AG04450 (cell line): ENCODE measurements at regions of chr12 and their contacts with region 1.

Region 1: GRCh38 chr12:49842519-49843352 is at the start of gene BCDIN3D:
- DNase-seq: peak; percentile 65
- H3K4me3 ChIP-seq: peak within 1 kb of the TSS; percentile 83
- H3K27ac ChIP-seq: peak within 1 kb of the TSS; percentile 92
- H3K27me3 ChIP-seq: no peaks in the 10 kb centered on the region
- CTCF ChIP-seq: no peak
- polyA plus RNA-seq, gene BCDIN3D: 3.7 and 3.8 TPM in 2 replicates

Region 2: DNA sequence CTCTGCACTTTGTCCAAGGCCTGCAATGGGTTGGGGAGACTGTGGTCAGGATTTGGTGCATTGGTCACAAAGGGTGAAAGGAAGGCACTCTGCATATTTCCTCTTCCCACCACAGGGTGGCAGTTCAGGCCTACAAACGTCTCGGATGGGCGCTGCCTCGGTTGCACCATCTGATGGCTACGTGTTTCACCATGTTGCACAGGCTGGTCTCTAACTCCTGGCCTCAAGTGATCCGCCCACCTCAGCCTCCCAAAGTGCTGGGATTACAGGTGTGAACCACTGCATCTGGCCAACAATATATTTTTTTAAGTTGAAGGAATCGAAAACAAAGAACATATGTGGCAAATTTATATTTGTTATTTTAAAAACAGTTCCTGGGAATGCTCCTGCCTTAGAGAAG is 66.3 kb before region 1 on chr12:
- CTCF ChIA-PET with region 1: interaction called, 30 read pairs
- POLR2A ChIA-PET with region 1: no interaction called
- DNase-seq: peak; percentile 56
- H3K4me3 ChIP-seq: no peak overlapping the region
- H3K27ac ChIP-seq: no peak overlapping the region
- H3K27me3 ChIP-seq: peaks cover 3% of the 10 kb centered on the region
- CTCF ChIP-seq: peak; percentile 87

Region 3: GRCh38 chr12:49828133-49829091 is 14.3 kb before region 1 on chr12 and contains the start of gene NCKAP5L:
- CTCF ChIA-PET with region 1: interaction called, 11 read pairs
- POLR2A ChIA-PET with region 1: interaction called, 23 read pairs
- DNase-seq: peak; percentile 96
- H3K4me3 ChIP-seq: peak within 1 kb of the TSS; percentile 86
- H3K27ac ChIP-seq: peak within 1 kb of the TSS; percentile 90
- H3K27me3 ChIP-seq: no peaks in the 10 kb centered on the region
- CTCF ChIP-seq: no peak
- polyA plus RNA-seq, gene NCKAP5L: 5.6 and 7.3 TPM in 2 replicates